OCI-LY7 (cell line): ENCODE measurements at regions of chr2 and their contacts with region 1.

Region 1: GRCh38 chr2:189952536-189953109 is 109.9 kb downstream of the MSTN start:
- DNase-seq: peak; percentile 77
- H3K4me3 ChIP-seq: peak overlapping the region; percentile 37
- H3K27ac ChIP-seq: peak overlapping the region; percentile 94
- H3K4me1 ChIP-seq: peaks cover 54% of the 10 kb centered on the region
- CTCF ChIP-seq: no peak

Region 2: DNA sequence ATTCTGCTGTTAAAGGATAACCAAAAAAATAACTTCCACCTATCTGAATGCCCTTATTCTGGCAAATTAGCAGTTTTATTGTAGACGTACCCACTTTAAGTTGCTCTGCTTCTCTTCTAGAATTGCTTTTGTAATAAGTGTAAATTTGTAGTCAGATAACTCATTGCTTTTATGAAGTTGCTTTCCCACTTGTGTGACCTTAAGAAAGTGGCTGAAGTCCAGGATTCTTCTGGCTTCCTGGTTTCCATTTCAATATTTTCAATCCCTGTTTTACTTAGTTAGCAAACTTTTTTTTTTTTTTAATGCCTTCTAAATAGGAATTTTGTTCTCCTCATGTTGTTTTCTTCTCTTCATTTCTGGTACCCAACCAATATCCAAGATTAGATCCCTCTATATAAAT is 987.8 kb after region 1 on chr2:
- CTCF ChIA-PET with region 1: no interaction called
- POLR2A ChIA-PET with region 1: interaction called, 11 read pairs
- intact Hi-C with region 1: no loop called
- DNase-seq: no peak
- H3K4me3 ChIP-seq: no peak overlapping the region
- H3K27ac ChIP-seq: no peak overlapping the region
- H3K4me1 ChIP-seq: no peaks in the 10 kb centered on the region
- CTCF ChIP-seq: no peak